Dendritic cell treated with granulocyte-macrophage colony-stimulating factor and Interleukin-4, amounts not matched to agents 40 ng/mL and 50 ng/mL, for 4 days (primary cell): ENCODE measurements at regions of chr18 and their contacts with region 1.

Region 1: GRCh38 chr18:79068937-79069791 is at the start of gene ATP9B:
- H3K4me3 Mint-ChIP-seq: peak within 1 kb of the TSS; percentile 67
- H3K27ac Mint-ChIP-seq: peak within 1 kb of the TSS; percentile 82
- H3K4me1 Mint-ChIP-seq: peaks cover 22% of the 10 kb centered on the region
- H3K27me3 Mint-ChIP-seq: peaks cover 23% of the 10 kb centered on the region

Region 2: DNA sequence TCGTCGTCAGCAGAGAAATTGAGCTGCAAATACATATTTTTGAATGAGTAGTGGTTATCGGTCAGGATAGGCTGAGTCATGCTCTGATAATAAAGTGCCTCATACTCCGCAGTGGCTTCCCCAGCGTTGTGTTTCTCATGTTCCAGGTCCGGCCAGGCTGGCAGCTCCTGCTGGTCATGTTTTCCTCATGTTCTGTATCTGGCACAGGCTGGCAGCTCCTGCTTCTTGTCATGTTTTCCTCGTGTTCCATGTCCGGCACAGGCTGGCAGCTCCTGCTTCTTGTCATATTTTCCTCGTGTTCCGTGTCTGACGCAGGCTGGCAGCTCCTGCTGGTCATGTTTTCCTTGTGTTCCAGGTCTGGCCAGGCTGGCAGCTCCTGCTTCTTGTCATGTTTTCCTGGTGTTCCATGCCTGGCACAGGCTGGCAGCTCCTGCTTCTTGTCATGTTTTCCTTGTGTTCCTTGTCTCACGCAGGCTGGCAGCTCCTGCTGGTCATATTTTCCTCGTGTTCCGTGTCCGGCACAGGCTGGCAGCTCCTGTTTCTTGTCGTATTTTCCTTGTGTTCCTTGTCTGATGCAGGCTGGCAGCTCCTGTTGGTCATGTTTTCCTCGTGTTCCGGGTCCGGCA is 148.9 kb after region 1 on chr18:
- intact Hi-C with region 1: loop called (anchors 10 kb)
- H3K4me3 Mint-ChIP-seq: no peak overlapping the region
- H3K27ac Mint-ChIP-seq: peak overlapping the region; percentile 63
- H3K4me1 Mint-ChIP-seq: peaks cover 16% of the 10 kb centered on the region
- H3K27me3 Mint-ChIP-seq: no peaks in the 10 kb centered on the region